Prostate gland (tissue), 2 donors: ENCODE measurements at regions of chr17 and their contacts with region 1.

Region 1: GRCh38 chr17:1275962-1276736 is 3.3 kb upstream of the TRARG1 start:
- DNase-seq: peak; percentile 45
- H3K4me3 ChIP-seq: no peak overlapping the region
- H3K27ac ChIP-seq: no peak overlapping the region
- H3K4me1 ChIP-seq: no peaks in the 10 kb centered on the region
- H3K27me3 ChIP-seq: no peaks in the 10 kb centered on the region
- CTCF ChIP-seq: peak; percentile 57 to 80 (median 66)
- POLR2A ChIP-seq: no peak

Region 2: DNA sequence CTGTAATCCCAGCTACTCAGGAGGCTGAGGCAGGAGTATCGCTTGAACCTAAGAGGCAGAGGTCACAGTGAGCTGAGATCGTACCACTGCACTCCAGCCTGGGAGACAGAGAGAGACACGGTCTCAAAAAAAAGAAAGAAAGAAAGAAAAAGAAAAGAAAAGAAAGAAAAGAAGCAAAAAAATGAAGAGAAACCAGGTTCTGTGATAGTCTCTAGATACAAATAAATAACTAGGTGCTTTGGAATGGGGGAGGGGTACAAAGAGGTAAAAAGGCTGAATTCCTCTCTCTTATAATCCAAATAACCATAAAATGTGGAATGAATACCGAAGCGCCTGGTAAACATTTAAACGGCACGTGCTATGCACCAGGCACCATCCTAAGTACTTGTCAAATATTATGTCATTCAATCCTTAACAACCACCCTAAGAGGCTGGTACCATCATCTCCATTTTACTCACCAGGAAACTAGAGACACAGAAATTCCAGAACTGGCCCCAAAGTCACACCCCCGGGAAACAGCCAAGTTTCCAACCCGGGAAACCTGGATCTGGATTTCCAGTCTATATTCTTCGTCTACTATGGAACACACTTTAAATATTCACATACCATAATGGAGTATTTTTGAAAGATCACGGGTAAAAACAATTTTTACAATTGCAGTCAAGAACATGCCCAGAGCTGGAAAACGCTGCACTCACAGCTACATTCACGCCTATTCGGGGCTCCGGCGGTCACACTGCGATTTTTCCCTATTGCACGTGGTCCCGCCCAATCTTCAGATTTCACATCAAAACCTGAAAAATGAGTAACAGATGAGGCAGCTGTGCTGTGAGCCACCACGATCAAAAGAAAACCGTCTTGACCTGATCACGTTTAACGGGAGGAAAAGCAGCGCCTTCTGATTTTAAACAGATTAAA is 307.1 kb before region 1 on chr17:
- intact Hi-C with region 1: no loop called
- DNase-seq: no peak
- H3K4me3 ChIP-seq: no peak overlapping the region
- H3K27ac ChIP-seq: peak overlapping the region; percentile 56 to 62
- H3K4me1 ChIP-seq: peaks cover 5% of the 10 kb centered on the region
- H3K27me3 ChIP-seq: no peaks in the 10 kb centered on the region
- CTCF ChIP-seq: no peak
- POLR2A ChIP-seq: no peak

Region 3: DNA sequence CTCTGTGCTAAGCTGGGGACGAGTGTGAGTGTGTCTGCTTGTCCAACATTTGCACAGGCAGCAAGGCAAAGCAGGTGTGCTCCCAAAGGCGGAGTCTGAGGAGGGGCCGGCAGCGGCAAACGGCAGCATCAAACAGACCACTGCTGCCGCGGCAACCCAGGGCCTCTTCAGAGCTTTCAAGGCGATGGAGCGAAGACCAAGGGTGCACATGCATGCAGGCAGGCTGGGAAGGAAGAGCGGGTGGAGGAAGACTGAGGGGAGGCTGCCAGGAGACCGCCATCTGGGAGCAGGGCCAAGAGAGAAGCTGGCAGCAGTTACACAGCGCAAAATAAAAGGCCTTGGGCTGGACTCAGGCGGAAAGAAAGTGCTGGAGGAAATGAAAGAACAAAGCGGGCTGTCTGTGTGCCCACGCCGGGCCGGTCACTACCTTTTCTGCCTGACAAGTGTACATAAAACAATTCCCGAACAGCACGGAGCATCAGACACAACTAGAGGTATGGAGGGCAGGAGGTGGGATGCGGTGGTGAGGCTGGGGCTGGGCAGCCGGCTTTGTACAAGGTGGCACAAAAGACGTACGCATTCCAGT is 270.7 kb before region 1 on chr17:
- intact Hi-C with region 1: no loop called
- DNase-seq: peak; percentile 77
- H3K4me3 ChIP-seq: peak overlapping the region in 1 of 2 donors; percentile 10
- H3K27ac ChIP-seq: peak overlapping the region; percentile 63 to 68
- H3K4me1 ChIP-seq: peaks cover 30% of the 10 kb centered on the region
- H3K27me3 ChIP-seq: no peaks in the 10 kb centered on the region
- CTCF ChIP-seq: no peak
- POLR2A ChIP-seq: no peak

Region 4: DNA sequence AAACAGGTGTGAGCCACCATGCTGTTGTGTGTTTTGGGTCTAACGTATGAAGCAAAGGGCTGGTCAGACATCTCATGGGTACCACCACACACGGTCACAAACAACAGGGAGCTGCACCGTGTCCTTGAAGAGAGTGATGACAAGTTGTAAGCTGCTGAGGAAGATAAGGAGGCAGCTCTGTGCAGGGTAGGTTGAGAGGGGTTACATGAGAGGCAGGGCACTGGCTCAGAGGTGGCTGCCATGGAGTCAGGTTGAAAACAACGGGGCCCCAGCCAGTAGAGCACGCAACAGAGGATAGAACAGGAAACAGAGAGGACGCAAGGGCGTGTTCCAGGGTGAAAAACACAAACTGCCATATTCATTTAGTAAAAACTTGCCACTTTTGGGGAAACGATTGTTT is 55.6 kb after region 1 on chr17:
- intact Hi-C with region 1: loop called (anchors 5 kb)
- DNase-seq: no peak
- H3K4me3 ChIP-seq: no peak overlapping the region
- H3K27ac ChIP-seq: no peak overlapping the region
- H3K4me1 ChIP-seq: no peaks in the 10 kb centered on the region
- H3K27me3 ChIP-seq: no peaks in the 10 kb centered on the region
- CTCF ChIP-seq: no peak
- POLR2A ChIP-seq: no peak